IMR-90 (cell line): ENCODE measurements at regions of chr2 and their contacts with region 1.

Region 1: GRCh38 chr2:100730346-100730745 is 89.6 kb upstream of the NPAS2 start:
- DNase-seq: peak; percentile 77
- ATAC-seq: peak; percentile 86
- H3K4me3 ChIP-seq: no peak overlapping the region
- H3K27ac ChIP-seq: no peak overlapping the region
- H3K4me1 ChIP-seq: peaks cover 12% of the 10 kb centered on the region
- H3K27me3 ChIP-seq: peaks cover 7% of the 10 kb centered on the region
- CTCF ChIP-seq: peak; percentile 93
- POLR2A ChIP-seq: no peak
- RAD21 ChIP-seq: peak; percentile 97

Region 2: DNA sequence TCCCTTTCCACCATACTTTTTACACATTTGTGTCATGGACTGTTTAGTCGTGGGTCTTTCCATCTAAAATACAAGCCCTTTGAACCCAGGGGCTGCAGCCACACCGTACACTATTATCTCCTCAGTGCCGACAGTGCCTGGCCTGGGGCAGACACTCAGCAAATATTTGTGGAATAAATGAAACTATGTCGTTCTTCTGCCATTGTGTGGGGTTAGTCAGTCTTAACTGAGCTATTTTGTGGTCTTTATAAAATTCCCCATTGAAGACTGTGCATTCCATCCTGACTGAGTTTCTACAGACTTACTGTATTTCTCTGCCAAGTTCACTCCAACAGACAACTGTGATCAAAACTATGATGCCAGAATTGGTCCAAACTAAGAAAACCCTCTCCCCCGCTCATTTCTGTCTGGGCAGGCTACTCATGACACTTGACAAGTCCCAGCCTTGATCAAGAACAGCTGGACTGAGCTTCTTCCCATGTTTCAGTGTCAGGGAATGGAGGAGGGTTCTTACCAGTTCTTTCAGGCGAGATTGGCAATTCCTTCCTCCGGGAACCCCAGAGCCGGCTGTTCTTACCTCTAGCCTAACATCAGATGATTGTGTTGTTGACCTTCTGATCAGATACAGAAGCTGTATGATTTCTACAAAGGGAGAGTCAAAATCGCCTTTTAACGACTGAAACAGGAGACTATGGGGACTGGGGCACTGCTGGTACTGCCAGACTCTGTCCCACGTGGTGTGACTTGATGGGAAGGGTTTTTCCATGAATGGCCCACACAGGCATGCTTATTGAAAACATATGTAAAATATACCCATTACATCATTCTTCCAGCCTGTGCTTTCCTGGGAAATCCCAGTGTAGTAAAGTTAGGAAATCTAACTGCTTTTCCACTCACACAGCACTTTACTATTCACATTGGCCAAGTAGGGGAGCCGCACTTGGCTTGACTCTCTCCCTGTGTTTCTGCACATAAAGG is 12.2 kb after region 1 on chr2:
- CTCF ChIA-PET with region 1: no interaction called
- POLR2A ChIA-PET with region 1: no interaction called
- dilution Hi-C with region 1: no loop called
- in situ Hi-C with region 1: no loop called
- intact Hi-C with region 1: loop called (anchors 1 kb)
- DNase-seq: peak; percentile 98
- ATAC-seq: peak; percentile 91
- H3K4me3 ChIP-seq: no peak overlapping the region; the same call in 1 of the 2 replicates
- H3K27ac ChIP-seq: peak overlapping the region; percentile 74
- H3K4me1 ChIP-seq: peaks cover 16% of the 10 kb centered on the region
- H3K27me3 ChIP-seq: no peaks in the 10 kb centered on the region
- CTCF ChIP-seq: no peak
- POLR2A ChIP-seq: peak; percentile 68
- RAD21 ChIP-seq: peak; percentile 31

Region 3: DNA sequence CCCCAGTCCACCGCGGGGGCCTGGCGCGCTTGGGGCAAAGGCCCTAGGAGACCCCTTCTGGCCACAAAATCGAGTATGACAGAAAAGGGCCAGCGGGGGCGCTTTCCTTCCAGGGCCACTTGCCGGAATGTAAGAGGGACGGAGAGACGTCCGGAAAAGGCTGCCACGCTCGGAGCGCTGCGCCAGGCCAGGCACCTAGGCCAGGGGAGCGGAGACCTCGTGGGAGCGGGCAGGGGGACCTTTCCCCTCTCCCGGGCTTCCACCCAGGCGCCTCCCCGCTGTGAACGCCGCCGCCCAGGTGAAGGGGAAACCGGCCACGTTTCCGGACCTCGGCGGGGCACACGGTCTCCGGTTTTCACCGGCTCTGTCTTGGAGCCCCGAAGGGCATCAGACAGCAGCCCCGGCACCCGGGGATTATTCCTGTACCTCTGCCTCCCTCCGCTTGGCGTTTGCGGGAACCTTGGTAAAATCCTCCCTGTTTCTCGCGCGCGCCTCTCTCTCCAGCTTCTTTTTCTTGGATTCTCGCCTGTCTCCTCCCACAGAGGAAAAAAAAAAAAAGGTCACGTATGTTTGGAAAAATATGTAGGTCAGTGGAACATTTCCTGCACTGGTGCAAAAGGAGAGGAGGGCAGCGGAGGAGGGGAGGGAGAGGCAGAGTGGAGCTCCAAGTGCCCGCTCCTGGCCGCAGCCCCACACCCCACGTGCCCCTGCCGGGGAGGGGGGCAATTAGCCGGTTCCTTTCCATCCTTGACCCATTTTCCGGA is 88.4 kb after region 1 on chr2:
- CTCF ChIA-PET with region 1: interaction called, 3 read pairs
- POLR2A ChIA-PET with region 1: interaction called, 7 read pairs
- dilution Hi-C with region 1: no loop called
- in situ Hi-C with region 1: loop called (anchors 5 kb)
- intact Hi-C with region 1: loop called (anchors 1 kb)
- DNase-seq: peak; percentile 72
- ATAC-seq: peak; percentile 40
- H3K4me3 ChIP-seq: peak overlapping the region; percentile 70
- H3K27ac ChIP-seq: peak overlapping the region; percentile 33; the same call in 1 of the 2 replicates
- H3K4me1 ChIP-seq: peaks cover 2% of the 10 kb centered on the region; the same call in 1 of the 2 replicates
- H3K27me3 ChIP-seq: no peaks in the 10 kb centered on the region
- CTCF ChIP-seq: peak; percentile 32
- POLR2A ChIP-seq: no peak; the same call in 1 of the 2 replicates
- RAD21 ChIP-seq: peak; percentile 17

Region 4: DNA sequence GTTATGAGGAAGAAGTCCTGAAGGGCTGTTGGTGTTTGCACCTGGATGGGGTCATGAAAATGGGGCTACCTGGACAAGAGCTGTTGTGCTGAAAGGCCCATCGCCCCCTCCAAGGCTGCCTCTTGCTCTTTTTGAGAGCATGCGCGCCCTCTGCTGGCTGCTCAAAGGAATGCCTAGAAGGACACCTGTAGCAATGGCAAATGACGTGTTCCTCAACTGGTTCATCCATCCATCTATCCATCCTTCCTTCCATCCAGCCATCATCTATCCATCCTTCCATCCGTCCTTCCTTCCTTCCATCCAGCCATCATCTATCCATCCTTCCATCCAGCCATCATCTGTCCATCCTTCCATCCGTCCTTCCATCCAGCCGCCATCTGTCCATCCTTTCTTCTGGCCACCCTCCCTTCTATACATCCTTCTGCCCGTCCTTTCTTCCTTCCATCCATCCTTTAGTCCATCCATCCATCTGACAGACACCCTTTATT is 254.6 kb after region 1 on chr2:
- CTCF ChIA-PET with region 1: interaction called, 13 read pairs
- POLR2A ChIA-PET with region 1: no interaction called
- dilution Hi-C with region 1: no loop called
- in situ Hi-C with region 1: loop called (anchors 5 kb)
- intact Hi-C with region 1: loop called (anchors 1 kb)
- DNase-seq: peak; percentile 69
- ATAC-seq: peak; percentile 82
- H3K4me3 ChIP-seq: no peak overlapping the region
- H3K27ac ChIP-seq: no peak overlapping the region
- H3K4me1 ChIP-seq: 0 out of 2 replicates have a peak, but pooled peaks cover 2% of the 10 kb centered on the region
- H3K27me3 ChIP-seq: no peaks in the 10 kb centered on the region
- CTCF ChIP-seq: peak; percentile 87
- POLR2A ChIP-seq: no peak
- RAD21 ChIP-seq: peak; percentile 96

Region 5: DNA sequence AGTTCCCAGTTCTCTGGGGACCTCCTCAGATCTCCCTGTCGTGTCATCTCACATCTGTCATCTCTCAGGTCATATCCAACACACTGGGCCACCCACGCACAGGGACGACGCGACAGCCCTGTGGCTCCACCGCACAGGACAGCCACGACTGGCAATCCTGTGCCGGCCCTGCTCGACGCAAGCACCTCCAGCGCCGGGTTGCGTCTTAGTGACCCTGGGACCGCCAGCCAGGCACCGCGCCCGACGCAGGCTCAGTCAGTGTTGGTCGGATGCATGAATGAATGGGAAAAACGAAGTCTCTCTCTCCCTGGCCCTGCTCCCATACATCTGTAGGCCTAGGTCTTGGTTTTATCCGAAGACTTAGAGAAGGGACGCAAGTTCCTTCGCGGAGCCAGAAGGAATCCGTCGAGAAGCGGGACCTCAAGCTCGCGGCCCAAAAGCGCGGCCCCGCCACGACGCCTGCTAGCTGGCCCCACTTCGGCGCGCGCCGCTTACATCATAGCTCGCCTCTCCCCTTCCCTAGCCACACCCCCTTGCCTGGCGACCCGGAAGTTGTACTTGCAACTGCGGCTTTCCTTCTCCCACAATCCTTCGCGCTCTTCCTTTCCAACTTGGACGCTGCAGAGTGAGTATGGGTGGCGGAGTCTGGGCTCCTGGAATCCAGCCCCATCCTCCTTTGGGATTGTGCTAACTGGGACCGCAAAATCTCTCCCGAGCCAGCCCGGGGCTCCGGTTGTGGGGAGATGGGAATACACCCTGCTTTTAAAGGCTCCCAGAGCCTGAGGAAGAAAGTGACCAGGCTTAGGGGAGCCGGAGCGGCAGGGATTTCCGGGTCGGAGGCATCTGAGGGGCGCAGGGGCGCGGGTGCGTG is 271.6 kb after region 1 on chr2 and contains the start of gene RPL31:
- CTCF ChIA-PET with region 1: interaction called, 4 read pairs
- POLR2A ChIA-PET with region 1: interaction called, 3 read pairs
- dilution Hi-C with region 1: no loop called
- in situ Hi-C with region 1: no loop called
- intact Hi-C with region 1: loop called (anchors 5 kb)
- DNase-seq: peak; percentile 97
- ATAC-seq: peak; percentile 92
- H3K4me3 ChIP-seq: peak within 1 kb of the TSS; percentile 77
- H3K27ac ChIP-seq: peak within 1 kb of the TSS; percentile 83
- H3K4me1 ChIP-seq: peaks cover 9% of the 10 kb centered on the region
- H3K27me3 ChIP-seq: no peaks in the 10 kb centered on the region
- CTCF ChIP-seq: no peak
- POLR2A ChIP-seq: peak; percentile 99
- RAD21 ChIP-seq: no peak
- total RNA-seq, gene RPL31: 358 and 938 TPM in 2 replicates